ENCODE measurements at regions of chr17 and their contacts with region 1.

Region 1: DNA sequence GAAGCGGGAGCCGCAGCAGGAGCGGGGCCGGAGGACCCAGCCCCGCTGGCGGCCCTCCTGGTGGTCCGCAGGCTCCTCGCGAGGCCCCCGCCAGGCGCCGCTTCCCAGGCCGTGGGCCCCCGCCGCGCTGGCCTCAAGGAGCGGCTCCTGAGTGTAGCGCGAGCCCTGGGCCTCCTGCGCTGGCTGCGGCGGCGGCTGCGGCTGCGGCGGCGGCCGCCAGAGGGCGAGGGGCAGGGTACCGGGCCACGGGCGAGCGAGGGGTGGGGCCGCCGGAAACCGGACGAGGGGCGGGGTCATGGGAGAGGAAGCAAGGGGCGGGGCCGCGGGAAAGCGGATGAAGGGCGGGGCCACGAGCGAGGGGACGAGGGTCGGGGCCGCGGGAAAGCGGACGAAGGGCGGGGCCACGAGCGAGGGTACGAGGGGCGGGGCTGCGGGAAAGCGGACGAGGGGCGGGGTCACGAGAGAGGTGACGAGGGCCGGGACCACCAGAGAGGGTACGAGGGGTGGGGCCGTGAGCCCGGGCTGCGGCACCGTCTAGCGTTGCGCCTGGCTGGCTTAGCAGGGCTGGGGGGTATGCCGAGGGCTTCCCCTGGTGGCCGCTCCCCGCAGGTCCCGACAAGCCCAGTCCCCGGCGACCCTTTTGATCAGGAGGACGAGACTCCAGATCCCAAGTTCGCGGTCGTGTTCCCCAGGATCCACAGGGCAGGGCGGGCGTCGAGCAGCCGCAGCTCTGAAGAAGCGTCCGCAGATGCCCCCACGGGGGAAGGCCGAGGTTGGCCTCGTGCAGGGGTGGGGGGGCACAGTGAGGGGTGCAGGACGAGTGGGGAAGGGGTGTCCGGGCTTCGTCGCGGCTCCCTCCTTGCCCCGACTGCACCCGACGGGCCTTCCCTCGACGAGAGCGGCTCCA is 1.7 kb downstream of the MYO15B start:
- DNase-seq: peak; percentile 98
- ATAC-seq: peak; percentile 87
- H3K4me3 Mint-ChIP-seq: peak overlapping the region; percentile 70
- H3K27ac Mint-ChIP-seq: peak overlapping the region; percentile 49
- H3K4me1 Mint-ChIP-seq: peaks cover 4% of the 10 kb centered on the region
- H3K27me3 Mint-ChIP-seq: no peaks in the 10 kb centered on the region
- CTCF ChIP-seq: peak; percentile 43

Region 2: GRCh38 chr17:75524953-75525719 is 64.1 kb before region 1 on chr17 and contains the start of gene LLGL2:
- CTCF ChIA-PET with region 1: interaction called, 3 read pairs
- POLR2A ChIA-PET with region 1: interaction called, 4 read pairs
- intact Hi-C with region 1: loop called (anchors 10 kb)
- DNase-seq: peak; percentile 82
- ATAC-seq: peak; percentile 95
- H3K4me3 Mint-ChIP-seq: peak within 1 kb of the TSS; percentile 69
- H3K27ac Mint-ChIP-seq: no peak within 1 kb of the TSS
- H3K4me1 Mint-ChIP-seq: peaks cover 10% of the 10 kb centered on the region
- H3K27me3 Mint-ChIP-seq: peaks cover 2% of the 10 kb centered on the region
- CTCF ChIP-seq: no peak
- total RNA-seq, gene LLGL2: 7.2 to 7.4 TPM

Region 3: DNA sequence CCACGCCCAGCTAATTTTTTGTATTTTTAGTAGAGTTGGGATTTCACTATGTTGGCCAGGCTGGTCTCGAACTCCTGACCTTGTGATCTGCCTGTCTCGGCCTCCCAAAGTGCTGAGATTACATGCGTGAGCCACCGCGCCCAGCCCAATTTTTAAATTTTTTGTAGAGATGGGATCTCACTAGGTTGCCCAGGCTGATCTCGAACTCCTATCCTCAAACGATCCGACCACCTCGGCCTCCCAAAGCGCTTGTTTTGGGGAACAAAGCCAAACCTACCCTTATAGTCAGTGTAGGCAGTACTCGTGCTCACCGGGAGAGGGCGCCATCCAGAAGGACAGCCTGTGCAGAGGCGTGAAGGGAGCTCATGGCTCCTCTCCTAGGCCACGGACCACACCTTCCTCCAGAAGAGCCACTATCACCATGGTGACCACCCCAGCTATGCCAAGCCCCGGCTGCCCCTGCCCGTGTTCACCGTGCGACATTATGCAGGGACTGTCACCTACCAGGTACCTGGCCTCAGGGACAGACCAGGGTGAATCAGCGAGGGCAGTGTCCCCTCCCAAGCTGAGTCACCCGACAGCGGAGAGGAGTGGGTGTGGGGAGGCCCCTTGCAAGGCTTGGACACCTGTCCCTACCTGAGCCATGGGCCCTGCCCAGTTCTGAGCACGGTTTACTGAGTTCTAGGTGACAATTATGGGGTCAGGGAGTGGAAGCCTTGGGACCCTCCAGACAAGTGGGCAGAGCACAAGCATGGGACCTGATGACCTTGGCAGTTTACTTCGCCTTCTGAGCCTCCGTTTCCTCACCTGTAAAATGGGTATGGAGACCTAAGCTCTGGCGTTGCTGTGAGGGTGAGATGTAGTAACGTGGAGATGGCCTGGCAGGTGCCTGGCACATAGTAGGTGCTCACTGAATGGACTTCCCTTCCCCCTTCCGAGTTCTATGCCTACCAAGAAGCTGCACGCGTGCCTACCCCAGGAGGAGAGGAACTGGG is 12.1 kb after region 1 on chr17:
- CTCF ChIA-PET with region 1: interaction called, 19 read pairs
- POLR2A ChIA-PET with region 1: interaction called, 3 read pairs
- intact Hi-C with region 1: no loop called
- DNase-seq: peak; percentile 82
- ATAC-seq: peak; percentile 94
- H3K4me3 Mint-ChIP-seq: no peak overlapping the region
- H3K27ac Mint-ChIP-seq: no peak overlapping the region
- H3K4me1 Mint-ChIP-seq: no peaks in the 10 kb centered on the region
- H3K27me3 Mint-ChIP-seq: no peaks in the 10 kb centered on the region
- CTCF ChIP-seq: peak; percentile 75

Region 4: GRCh38 chr17:75645889-75646637 is 56.8 kb after region 1 on chr17:
- CTCF ChIA-PET with region 1: no interaction called
- POLR2A ChIA-PET with region 1: no interaction called
- intact Hi-C with region 1: no loop called
- DNase-seq: peak; percentile 36
- ATAC-seq: peak; percentile 88
- H3K4me3 Mint-ChIP-seq: no peak overlapping the region
- H3K27ac Mint-ChIP-seq: peak overlapping the region; percentile 60
- H3K4me1 Mint-ChIP-seq: peaks cover 4% of the 10 kb centered on the region
- H3K27me3 Mint-ChIP-seq: no peaks in the 10 kb centered on the region
- CTCF ChIP-seq: no peak